ENCODE measurements at regions of chr15 and their contacts with region 1.

Region 1: GRCh38 chr15:38563723-38564519 is 693 bp downstream of the RASGRP1 start:
- DNase-seq: peak; percentile 74
- ATAC-seq: peak; percentile 62
- H3K4me3 Mint-ChIP-seq: peak overlapping the region; percentile 66
- H3K27ac Mint-ChIP-seq: no peak overlapping the region
- H3K4me1 Mint-ChIP-seq: peaks cover 15% of the 10 kb centered on the region
- H3K27me3 Mint-ChIP-seq: peaks cover 37% of the 10 kb centered on the region
- CTCF ChIP-seq: peak; percentile 92

Region 2: DNA sequence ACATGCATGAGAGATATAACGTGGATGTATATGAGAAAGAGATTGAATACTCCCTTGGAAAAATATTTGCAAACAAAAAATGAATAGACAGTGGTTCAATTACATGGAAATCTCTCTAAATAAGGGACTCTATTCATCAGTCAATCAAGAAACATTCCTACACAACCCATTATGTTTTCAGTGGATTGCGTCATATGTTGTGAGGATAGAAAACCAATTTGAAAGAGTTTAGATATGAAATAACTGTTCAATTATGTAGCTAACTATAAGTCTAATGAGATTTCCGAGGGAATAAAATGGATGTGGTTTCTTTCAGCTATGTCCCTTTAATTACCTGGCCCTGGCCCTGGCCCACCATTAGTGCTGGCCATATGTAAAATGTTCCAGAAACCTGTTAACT is 716.1 kb before region 1 on chr15:
- CTCF ChIA-PET with region 1: no interaction called
- POLR2A ChIA-PET with region 1: no interaction called
- DNase-seq: no peak
- ATAC-seq: no peak
- H3K4me3 Mint-ChIP-seq: no peak overlapping the region
- H3K27ac Mint-ChIP-seq: no peak overlapping the region
- H3K4me1 Mint-ChIP-seq: 0 out of 2 replicates have a peak, but pooled peaks cover under 1% of the 10 kb centered on the region
- H3K27me3 Mint-ChIP-seq: no peaks in the 10 kb centered on the region
- CTCF ChIP-seq: no peak

Region 3: DNA sequence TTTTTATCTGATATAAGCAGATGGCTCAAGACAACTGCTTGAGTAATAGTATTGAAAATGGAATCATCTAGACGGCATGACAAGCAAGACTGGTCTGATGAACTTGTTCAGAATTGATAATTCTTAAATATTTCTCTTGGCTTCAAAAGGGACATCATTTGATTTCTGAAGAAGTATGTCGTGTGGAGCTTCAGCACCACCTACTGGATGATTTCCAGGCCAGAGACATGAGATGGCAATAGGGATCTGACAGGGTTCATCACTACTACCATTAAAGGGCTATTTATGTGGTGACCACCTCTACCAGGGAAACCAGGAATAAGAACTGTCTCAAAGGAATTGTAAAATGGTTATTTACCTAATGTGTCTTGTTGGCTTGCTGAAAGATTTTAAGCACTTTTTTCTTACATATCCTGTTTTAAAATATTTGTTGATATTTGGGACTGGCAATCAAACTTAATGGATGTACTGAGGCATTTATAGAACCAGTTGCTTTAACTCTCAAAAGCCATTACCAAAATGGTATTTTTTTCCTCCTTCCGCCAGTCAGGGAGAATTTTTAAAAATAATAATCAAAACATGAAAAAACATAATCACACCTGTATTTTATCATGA is 209.5 kb before region 1 on chr15:
- CTCF ChIA-PET with region 1: no interaction called
- POLR2A ChIA-PET with region 1: no interaction called
- DNase-seq: peak; percentile 58
- ATAC-seq: peak; percentile 79; the same call in 1 of the 2 replicates
- H3K4me3 Mint-ChIP-seq: no peak overlapping the region
- H3K27ac Mint-ChIP-seq: no peak overlapping the region
- H3K4me1 Mint-ChIP-seq: peaks cover 18% of the 10 kb centered on the region
- H3K27me3 Mint-ChIP-seq: no peaks in the 10 kb centered on the region
- CTCF ChIP-seq: peak; percentile 42; the same call in 1 of the 2 replicates

Region 4: DNA sequence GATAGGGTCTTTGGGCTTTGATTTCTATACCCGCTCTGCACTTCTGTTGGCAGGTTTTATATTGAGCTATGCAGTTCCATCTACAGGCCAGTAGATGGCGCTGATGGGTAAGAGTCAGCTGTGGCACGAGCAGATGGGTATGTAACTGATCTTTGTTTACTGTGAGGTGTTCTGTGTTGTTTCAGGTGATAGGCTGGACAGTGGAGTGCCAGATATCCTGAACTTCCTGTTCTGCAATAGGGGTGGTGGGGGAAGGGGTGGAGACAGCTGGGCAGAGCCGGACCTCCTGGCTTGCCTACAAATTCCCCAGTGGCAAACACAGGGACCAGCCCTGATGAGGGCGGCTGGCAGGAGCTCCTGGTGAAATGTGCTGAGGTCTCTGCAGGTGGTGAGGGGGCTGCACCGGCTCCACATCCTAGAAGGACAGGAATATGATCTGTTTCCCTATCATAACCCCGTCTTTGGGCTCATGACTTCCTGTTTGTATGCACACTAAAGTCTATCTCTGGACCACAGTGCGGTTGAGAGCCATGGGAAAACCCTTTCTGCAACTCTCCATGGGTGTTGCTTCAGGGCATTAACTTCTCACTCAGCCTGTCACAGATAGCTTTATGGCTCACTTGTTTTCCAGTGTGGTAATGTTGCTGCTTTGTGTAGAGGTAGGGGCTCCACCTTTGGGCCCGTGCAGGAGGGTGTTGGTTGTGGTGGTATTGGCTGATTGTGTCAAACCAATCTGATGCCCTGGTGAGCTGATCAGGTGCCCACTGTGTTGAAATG is 123.4 kb before region 1 on chr15:
- CTCF ChIA-PET with region 1: interaction called, 59 read pairs
- POLR2A ChIA-PET with region 1: interaction called, 3 read pairs
- DNase-seq: peak; percentile 27
- ATAC-seq: peak; percentile 96
- H3K4me3 Mint-ChIP-seq: 0 out of 2 replicates have a peak overlapping the region, but pooled peaks have one; percentile 22
- H3K27ac Mint-ChIP-seq: no peak overlapping the region
- H3K4me1 Mint-ChIP-seq: peaks cover 7% of the 10 kb centered on the region; the same call in 1 of the 2 replicates
- H3K27me3 Mint-ChIP-seq: peaks cover 3% of the 10 kb centered on the region; the same call in 1 of the 2 replicates
- CTCF ChIP-seq: peak; percentile 91

Region 5: DNA sequence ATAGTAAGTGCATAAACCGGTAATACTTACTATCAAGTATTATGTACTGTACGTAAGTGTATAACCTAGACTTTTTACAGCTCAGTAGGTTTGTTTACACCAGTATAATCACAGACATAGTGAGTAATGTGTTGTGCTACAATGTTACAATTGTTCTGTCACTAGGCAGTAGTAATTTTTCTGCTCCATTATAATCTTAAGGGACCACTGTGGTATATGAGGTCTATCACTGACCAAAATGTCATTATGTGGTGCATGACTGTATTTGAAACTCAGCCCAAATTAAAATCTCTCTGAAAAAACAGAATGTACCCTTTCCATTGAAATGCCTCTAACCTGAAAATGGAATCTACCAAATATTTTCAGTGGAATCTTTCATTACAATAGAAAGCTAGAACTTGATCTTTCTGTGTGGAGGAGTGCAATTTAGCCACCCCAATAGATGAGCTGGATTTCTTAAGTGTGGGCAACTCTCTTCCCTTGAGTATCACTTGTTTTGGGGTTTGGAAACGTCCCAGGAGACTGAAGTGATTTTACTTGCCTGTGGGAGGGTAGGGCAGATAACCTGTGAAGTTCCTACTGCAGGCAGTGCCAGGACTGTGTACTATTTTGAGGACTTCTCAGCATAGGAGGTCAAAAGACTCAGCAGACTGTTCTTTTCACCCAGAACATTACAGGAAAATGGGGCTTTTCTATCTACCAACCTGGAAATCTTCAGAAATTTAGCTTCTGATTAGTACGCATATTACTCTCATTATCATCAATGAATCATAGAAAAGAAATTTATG is 59.0 kb before region 1 on chr15:
- CTCF ChIA-PET with region 1: interaction called, 11 read pairs
- POLR2A ChIA-PET with region 1: no interaction called
- DNase-seq: no peak
- ATAC-seq: no peak
- H3K4me3 Mint-ChIP-seq: no peak overlapping the region
- H3K27ac Mint-ChIP-seq: no peak overlapping the region
- H3K4me1 Mint-ChIP-seq: no peaks in the 10 kb centered on the region
- H3K27me3 Mint-ChIP-seq: no peaks in the 10 kb centered on the region
- CTCF ChIP-seq: no peak

Region 6: GRCh38 chr15:38576837-38577236 is 12.9 kb after region 1 on chr15:
- CTCF ChIA-PET with region 1: interaction called, 17 read pairs
- POLR2A ChIA-PET with region 1: no interaction called
- DNase-seq: no peak
- ATAC-seq: no peak
- H3K4me3 Mint-ChIP-seq: no peak overlapping the region
- H3K27ac Mint-ChIP-seq: no peak overlapping the region
- H3K4me1 Mint-ChIP-seq: peaks cover 7% of the 10 kb centered on the region
- H3K27me3 Mint-ChIP-seq: peaks cover 3% of the 10 kb centered on the region
- CTCF ChIP-seq: no peak

Region 7: DNA sequence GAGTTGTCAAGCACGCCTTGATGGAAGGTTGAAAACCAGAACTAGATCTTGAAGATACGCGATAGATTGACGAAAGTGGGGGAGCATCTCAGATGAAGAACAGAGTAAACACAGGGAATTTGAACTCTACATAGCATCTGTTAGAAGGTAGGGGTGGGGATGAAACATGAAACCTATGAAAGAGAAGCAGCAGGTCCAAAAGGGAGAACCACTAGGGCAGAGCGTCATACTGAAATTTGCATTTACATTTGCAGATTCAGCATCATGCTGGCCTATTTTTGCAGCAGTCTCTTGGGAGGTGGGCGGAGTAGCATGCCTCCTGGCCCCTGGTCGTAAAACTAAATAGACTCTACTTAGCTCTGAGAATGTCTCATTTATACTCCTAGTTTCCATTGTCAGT is 46.8 kb after region 1 on chr15:
- CTCF ChIA-PET with region 1: interaction called, 22 read pairs
- POLR2A ChIA-PET with region 1: no interaction called
- DNase-seq: no peak
- ATAC-seq: no peak
- H3K4me3 Mint-ChIP-seq: no peak overlapping the region
- H3K27ac Mint-ChIP-seq: no peak overlapping the region
- H3K4me1 Mint-ChIP-seq: peaks cover 15% of the 10 kb centered on the region
- H3K27me3 Mint-ChIP-seq: no peaks in the 10 kb centered on the region
- CTCF ChIP-seq: no peak

Region 8: GRCh38 chr15:38662033-38662802 is 98.3 kb after region 1 on chr15:
- CTCF ChIA-PET with region 1: interaction called, 17 read pairs
- POLR2A ChIA-PET with region 1: no interaction called
- DNase-seq: no peak
- ATAC-seq: no peak
- H3K4me3 Mint-ChIP-seq: no peak overlapping the region
- H3K27ac Mint-ChIP-seq: no peak overlapping the region
- H3K4me1 Mint-ChIP-seq: no peaks in the 10 kb centered on the region
- H3K27me3 Mint-ChIP-seq: no peaks in the 10 kb centered on the region
- CTCF ChIP-seq: no peak

Region 9: GRCh38 chr15:38699633-38700230 is 135.8 kb after region 1 on chr15:
- CTCF ChIA-PET with region 1: interaction called, 42 read pairs
- POLR2A ChIA-PET with region 1: no interaction called
- DNase-seq: peak; percentile 67
- ATAC-seq: peak; percentile 68
- H3K4me3 Mint-ChIP-seq: no peak overlapping the region
- H3K27ac Mint-ChIP-seq: no peak overlapping the region
- H3K4me1 Mint-ChIP-seq: peaks cover 13% of the 10 kb centered on the region
- H3K27me3 Mint-ChIP-seq: no peaks in the 10 kb centered on the region
- CTCF ChIP-seq: peak; percentile 60

Region 10: DNA sequence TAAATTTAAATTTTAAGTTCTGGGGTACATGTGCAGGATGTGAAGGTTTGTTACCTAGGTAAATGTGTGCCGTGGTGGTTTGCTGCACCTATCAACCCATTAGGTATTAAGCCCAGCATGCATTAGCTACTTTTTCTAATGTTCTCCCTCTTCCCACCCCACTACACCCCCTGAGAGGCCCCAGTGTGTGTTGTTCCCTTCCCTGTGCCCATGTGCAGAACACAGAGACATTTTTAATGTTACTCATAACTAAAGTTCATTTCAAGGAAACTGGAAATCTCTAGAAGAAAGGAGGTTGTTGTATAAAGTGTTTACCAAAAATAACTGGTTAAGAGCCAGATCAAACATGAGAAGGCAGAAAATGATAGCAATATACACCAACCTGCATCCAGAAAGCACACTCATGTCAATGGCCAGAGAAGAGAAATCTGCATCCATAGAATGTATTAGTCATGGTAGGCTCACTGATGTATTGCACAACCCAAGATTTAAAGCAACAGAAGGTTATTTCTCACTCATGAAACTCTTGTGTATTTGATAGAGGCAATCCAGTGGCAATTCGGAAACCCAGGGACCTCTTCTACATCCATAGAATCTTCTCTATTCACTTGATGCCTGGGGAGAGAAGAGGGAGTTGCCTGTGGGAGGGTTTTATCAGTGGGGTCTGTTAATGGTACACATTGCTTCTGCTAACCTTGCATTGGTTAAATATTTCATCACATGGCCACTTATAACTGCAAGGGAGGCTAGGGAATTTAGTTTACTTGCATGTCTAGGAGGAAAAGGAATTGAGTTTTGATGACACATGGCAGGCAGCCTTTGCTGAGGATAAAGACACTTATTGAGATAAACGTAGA is 322.6 kb after region 1 on chr15:
- CTCF ChIA-PET with region 1: no interaction called
- POLR2A ChIA-PET with region 1: no interaction called
- DNase-seq: no peak
- ATAC-seq: no peak
- H3K4me3 Mint-ChIP-seq: no peak overlapping the region
- H3K27ac Mint-ChIP-seq: no peak overlapping the region
- H3K4me1 Mint-ChIP-seq: no peaks in the 10 kb centered on the region
- H3K27me3 Mint-ChIP-seq: no peaks in the 10 kb centered on the region; the same call in 1 of the 2 replicates
- CTCF ChIP-seq: no peak